ENCODE measurements at regions of chr2 and their contacts with region 1.

Region 1: GRCh38 chr2:237744613-237745249 is 53.8 kb upstream of the RBM44 start:
- DNase-seq: peak; percentile 77
- H3K4me3 ChIP-seq: no peak overlapping the region
- H3K27ac ChIP-seq: peak overlapping the region; percentile 12
- H3K4me1 ChIP-seq: peaks cover 58% of the 10 kb centered on the region
- H3K27me3 ChIP-seq: no peaks in the 10 kb centered on the region
- CTCF ChIP-seq: peak; percentile 99

Region 2: GRCh38 chr2:237581751-237582746 is 162.7 kb before region 1 on chr2:
- intact Hi-C with region 1: loop called (anchors 5 kb)
- DNase-seq: peak; percentile 81
- H3K4me3 ChIP-seq: peak overlapping the region; percentile 46
- H3K27ac ChIP-seq: peak overlapping the region; percentile 88
- H3K4me1 ChIP-seq: peaks cover 34% of the 10 kb centered on the region
- H3K27me3 ChIP-seq: no peaks in the 10 kb centered on the region
- CTCF ChIP-seq: peak; percentile 68

Region 3: GRCh38 chr2:237600205-237600846 is 144.4 kb before region 1 on chr2:
- intact Hi-C with region 1: no loop called
- DNase-seq: peak; percentile 62
- H3K4me3 ChIP-seq: peak overlapping the region; percentile 38
- H3K27ac ChIP-seq: peak overlapping the region; percentile 90
- H3K4me1 ChIP-seq: peaks cover 55% of the 10 kb centered on the region
- H3K27me3 ChIP-seq: no peaks in the 10 kb centered on the region
- CTCF ChIP-seq: peak; percentile 47

Region 4: DNA sequence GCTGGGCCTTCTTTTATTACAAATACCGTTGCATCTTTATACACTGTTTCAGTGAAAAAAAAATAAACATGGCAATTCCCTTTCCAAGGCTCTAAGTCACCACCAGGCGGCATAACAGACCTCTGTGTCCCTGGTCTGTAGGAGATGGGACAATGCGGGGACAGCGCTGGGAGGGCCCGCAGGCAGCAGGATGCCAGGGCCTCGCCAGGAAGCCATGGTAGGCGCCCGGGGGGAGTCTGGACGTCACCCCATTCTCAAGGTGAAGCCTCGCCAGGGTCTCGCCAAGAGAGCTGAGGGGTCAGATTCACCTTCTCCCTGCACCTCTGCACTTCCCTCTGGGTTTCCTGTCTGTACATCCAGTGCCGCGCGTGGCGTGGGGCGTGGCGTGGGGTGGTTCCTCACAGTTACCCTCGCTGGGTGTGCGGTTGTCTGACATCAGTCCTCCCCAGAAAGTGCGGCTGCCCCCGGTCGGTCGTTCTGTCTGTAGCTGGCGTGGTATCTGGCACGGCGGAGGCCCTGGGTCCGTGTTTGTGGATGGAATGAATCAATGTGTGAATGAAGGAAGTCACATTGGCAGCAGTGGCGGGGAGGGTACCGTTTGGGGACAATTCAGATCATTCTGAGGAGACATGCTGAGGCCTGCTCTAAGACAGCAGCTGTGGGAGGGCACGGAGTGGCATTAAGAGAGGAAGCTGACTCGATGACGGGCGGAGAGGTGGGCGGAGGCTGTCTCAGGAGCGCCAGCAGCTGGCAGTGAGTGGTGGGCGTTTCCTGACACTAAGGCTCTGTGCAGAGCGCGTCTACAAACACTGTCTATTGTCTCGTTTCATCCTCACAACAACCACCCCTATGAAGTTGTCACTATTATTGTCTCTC is 71.4 kb before region 1 on chr2:
- intact Hi-C with region 1: loop called (anchors 1 kb)
- DNase-seq: peak; percentile 66
- H3K4me3 ChIP-seq: peak overlapping the region; percentile 51
- H3K27ac ChIP-seq: peak overlapping the region; percentile 83
- H3K4me1 ChIP-seq: peaks cover 92% of the 10 kb centered on the region
- H3K27me3 ChIP-seq: no peaks in the 10 kb centered on the region
- CTCF ChIP-seq: peak; percentile 73

Region 5: DNA sequence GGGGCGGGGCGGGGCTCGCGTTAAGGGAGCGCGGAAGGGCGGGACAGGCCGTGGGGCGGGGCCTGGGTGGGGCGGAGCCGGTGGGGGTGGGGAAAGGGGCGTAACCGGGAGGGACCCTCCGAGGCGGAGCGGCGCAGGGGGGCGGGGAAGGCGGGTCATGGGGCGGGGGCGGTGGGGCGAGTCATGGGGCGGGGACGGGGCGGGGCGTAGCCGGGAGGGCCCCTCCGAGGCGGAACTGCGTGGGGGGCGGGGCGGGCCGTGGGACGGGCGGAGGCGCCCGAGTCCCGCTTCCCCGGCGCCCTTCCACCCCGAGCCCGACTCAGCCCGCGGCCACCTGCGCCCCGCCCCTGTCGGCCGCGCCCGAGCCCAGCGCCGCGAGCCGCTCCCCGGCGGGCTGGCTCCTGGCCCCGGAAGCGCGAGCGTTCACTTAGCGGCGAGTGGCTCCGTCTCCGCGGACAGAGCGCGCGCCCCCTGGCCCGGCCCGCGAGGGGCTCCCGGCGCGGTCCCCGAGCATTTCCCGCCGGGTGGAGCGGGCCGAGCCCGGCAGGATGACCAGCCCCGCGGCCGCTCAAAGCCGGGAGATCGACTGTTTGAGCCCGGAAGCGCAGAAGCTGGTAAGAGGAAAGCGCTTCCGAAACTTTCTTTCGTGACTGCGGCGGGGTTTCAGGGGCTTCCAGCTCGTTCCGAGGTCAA is 52.7 kb before region 1 on chr2:
- intact Hi-C with region 1: no loop called
- DNase-seq: peak; percentile 96
- H3K4me3 ChIP-seq: peak overlapping the region; percentile 94
- H3K27ac ChIP-seq: peak overlapping the region; percentile 94
- H3K4me1 ChIP-seq: peaks cover 95% of the 10 kb centered on the region
- H3K27me3 ChIP-seq: no peaks in the 10 kb centered on the region
- CTCF ChIP-seq: peak; percentile 9

Measured in left ventricle myocardium inferior (tissue), 1 donor.